ENCODE measurements at regions of chr1 and their contacts with region 1.

Region 1: DNA sequence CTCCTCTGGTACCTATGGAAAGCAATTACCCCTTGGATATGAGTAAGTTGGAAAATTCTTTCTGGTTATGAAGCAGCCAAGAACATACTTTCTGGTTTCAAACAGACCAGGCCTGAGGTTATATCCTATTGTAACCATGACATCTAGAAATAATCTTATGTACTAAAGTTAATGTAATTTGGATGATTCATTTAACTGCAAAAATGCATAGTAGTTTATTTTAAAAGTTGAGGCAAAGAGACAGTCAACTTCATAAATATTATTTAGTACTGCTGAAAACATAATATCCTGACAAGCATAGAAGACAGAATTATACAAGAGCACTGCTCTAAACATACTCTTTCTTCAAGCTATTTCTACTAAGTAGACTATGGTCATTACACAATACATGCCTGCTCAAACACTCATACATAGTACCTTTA is 25.5 kb downstream of the ODF2L start:
- DNase-seq: no peak
- ATAC-seq: no peak
- H3K4me3 ChIP-seq: no peak overlapping the region
- H3K27ac ChIP-seq: no peak overlapping the region
- H3K4me1 ChIP-seq: no peaks in the 10 kb centered on the region
- H3K27me3 ChIP-seq: no peaks in the 10 kb centered on the region
- CTCF ChIP-seq: no peak
- POLR2A ChIP-seq: no peak

Region 2: DNA sequence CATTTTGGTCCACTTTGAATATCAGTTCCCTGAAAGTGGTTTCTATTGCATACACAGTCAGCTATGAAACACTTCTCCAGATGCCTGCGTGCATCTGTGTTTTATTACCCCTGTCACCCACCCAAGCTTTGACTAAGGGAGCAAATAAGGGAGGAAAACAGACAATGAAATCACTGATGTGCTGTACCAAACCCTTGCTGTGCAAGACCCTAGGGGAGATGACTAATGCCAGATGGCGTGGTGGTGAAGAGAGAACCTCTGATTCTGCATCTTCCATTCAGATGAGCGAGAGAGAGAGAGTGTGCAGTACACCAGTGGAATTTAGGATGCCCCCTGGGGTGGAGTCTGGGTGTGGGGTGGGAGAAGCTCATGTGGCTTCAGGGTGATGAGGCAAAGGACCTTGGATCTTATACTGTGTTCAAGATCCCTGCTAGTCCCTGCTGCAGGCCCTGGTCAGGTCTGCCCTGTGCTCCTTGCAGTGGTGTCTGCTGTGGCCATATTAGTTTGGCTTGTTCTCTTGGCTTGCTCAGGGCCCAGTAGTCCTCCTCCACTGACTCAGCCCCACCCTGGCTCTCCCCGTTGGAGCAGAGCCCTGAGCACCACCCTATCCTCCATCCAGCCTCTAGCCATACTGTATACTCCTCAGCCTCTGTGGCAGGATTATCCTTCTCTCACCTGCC is 116.7 kb after region 1 on chr1:
- intact Hi-C with region 1: loop called in 1 of 2 experiments (anchors 10 kb)
- DNase-seq: no peak
- ATAC-seq: peak in 2 of 4 donors; percentile 14 to 25
- H3K4me3 ChIP-seq: no peak overlapping the region
- H3K27ac ChIP-seq: no peak overlapping the region
- H3K4me1 ChIP-seq: no peaks in the 10 kb centered on the region
- H3K27me3 ChIP-seq: no peaks in the 10 kb centered on the region
- CTCF ChIP-seq: no peak
- POLR2A ChIP-seq: no peak

Measured in right lobe of liver (tissue), 6 donors.